ENCODE measurements at regions of chr1 and their contacts with region 1.

Region 1: GRCh38 chr1:48093696-48094528 is 96.7 kb upstream of the TRABD2B start:
- DNase-seq: peak; percentile 67 to 76
- ATAC-seq: peak; percentile 97 to 99
- H3K4me3 ChIP-seq: peak overlapping the region; percentile 26
- H3K27ac ChIP-seq: no peak overlapping the region
- H3K4me1 ChIP-seq: 0 out of 3 replicates have a peak, but pooled peaks cover 3% of the 10 kb centered on the region
- CTCF ChIP-seq: peak; percentile 52
- EP300 ChIP-seq: no peak
- POLR2A ChIP-seq: no peak
- RAD21 ChIP-seq: peak; percentile 48 to 52; a peak in 4 of 5 replicates

Region 2: DNA sequence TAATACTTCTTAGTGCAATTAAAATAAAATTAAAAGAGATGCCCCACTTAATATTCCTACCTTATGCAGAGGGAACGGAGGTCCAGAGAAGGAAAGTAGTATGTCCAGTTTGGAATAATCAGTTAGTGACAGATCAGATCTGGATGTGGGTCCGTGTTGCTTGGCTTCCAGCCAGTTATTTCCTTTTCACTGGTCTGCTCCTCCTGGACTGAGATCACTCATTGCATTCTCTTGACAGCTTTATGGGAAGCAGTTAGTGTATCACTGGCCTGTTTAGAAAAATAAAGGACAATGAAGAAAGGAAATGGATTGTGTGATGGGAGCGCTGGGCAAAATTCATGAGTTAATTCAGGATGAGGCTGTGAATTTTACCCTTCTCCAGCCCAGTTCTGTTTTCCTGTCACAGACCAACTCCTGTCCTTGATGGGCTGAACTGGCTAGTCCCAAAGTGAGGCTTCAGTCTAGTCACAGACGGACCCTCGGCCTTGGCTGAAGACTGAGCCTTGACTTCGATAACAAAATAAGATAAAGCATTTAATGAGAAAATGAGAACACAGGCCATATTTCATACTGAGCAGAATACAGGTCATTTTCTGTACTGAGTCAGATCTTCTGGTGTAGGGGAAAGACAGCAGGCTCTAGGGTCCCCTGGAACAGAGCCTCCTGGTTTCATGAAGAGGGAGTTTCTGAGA is 11.5 kb before region 1 on chr1:
- CTCF ChIA-PET with region 1: interaction called, 10 read pairs
- POLR2A ChIA-PET with region 1: no interaction called
- DNase-seq: no peak
- ATAC-seq: no peak
- H3K4me3 ChIP-seq: no peak overlapping the region
- H3K27ac ChIP-seq: no peak overlapping the region
- H3K4me1 ChIP-seq: no peaks in the 10 kb centered on the region
- CTCF ChIP-seq: no peak
- EP300 ChIP-seq: no peak
- POLR2A ChIP-seq: no peak
- RAD21 ChIP-seq: no peak

Region 3: DNA sequence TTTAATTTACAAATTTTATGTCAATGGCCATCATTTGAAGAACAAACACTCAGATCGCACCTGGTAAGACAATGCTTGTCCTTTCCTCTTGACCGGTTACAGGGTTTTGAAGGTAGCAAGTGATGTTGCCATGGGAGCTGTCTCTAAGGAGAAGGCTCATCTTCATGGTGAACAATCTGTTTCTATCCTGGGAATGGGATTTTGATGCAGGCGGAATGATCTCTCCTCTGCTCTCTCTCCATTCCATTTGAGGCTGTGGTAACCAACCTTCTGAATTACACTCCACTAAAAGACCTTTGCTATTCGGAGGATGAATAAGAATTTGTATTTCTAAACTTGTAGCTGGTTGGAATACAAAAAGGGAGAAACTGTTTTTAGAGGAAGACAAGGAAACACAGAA is 70.7 kb after region 1 on chr1:
- CTCF ChIA-PET with region 1: no interaction called
- POLR2A ChIA-PET with region 1: no interaction called
- DNase-seq: no peak
- ATAC-seq: no peak
- H3K4me3 ChIP-seq: no peak overlapping the region
- H3K27ac ChIP-seq: no peak overlapping the region
- H3K4me1 ChIP-seq: no peaks in the 10 kb centered on the region
- CTCF ChIP-seq: no peak
- EP300 ChIP-seq: no peak
- POLR2A ChIP-seq: no peak
- RAD21 ChIP-seq: no peak

Region 4: DNA sequence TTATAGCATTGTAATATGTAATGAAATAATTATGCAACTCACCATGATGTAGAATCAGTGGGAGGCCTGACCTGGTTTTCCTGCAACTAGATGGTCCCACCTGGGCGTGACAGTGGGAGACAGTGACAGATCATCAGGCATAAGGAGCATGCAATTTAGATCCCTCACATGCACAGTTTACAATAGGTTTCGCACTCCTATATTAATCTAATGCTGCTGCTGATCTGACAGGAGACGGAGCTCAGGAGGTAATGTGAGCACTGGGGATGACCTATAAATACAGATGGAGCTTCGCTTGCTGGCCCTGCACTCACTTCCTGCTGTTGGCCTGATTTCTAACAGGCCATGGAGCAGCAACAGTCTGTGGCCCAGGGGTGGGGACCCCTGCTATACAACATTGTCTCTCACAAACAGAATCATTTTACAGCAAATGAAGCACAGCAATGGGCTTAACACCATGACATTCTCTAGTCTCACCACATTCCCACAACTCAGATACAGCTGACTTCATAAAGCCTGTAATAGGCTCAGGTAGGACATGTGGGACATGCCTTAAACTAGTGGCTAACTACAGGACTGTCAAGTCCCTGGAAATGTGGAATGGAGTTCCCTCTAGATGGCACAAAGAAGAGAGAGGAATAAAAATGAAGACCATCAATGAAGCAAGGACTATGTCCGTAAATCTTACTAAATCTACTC is 87.9 kb after region 1 on chr1:
- CTCF ChIA-PET with region 1: no interaction called
- POLR2A ChIA-PET with region 1: no interaction called
- DNase-seq: no peak
- ATAC-seq: no peak
- H3K4me3 ChIP-seq: no peak overlapping the region
- H3K27ac ChIP-seq: no peak overlapping the region
- H3K4me1 ChIP-seq: no peaks in the 10 kb centered on the region
- CTCF ChIP-seq: no peak
- EP300 ChIP-seq: no peak
- POLR2A ChIP-seq: no peak
- RAD21 ChIP-seq: no peak

Region 5: GRCh38 chr1:48236716-48237470 is 143.0 kb after region 1 on chr1:
- CTCF ChIA-PET with region 1: interaction called, 11 read pairs
- POLR2A ChIA-PET with region 1: no interaction called
- DNase-seq: peak; percentile 33 to 40
- ATAC-seq: peak; percentile 79 to 81
- H3K4me3 ChIP-seq: no peak overlapping the region
- H3K27ac ChIP-seq: no peak overlapping the region
- H3K4me1 ChIP-seq: no peaks in the 10 kb centered on the region
- CTCF ChIP-seq: peak; percentile 45
- EP300 ChIP-seq: no peak
- POLR2A ChIP-seq: no peak
- RAD21 ChIP-seq: peak; percentile 54 to 65

Measured in A549 (cell line).